ENCODE measurements at regions of chr3 and their contacts with region 1.

Region 1: GRCh38 chr3:46359733-46360493 is 6.0 kb downstream of the CCR2 start:
- DNase-seq: peak; percentile 66
- ATAC-seq: peak; percentile 83
- H3K4me3 Mint-ChIP-seq: no peak overlapping the region
- H3K27ac Mint-ChIP-seq: peak overlapping the region; percentile 64
- H3K4me1 Mint-ChIP-seq: peaks cover 81% of the 10 kb centered on the region
- H3K27me3 Mint-ChIP-seq: peaks cover 20% of the 10 kb centered on the region

Region 2: DNA sequence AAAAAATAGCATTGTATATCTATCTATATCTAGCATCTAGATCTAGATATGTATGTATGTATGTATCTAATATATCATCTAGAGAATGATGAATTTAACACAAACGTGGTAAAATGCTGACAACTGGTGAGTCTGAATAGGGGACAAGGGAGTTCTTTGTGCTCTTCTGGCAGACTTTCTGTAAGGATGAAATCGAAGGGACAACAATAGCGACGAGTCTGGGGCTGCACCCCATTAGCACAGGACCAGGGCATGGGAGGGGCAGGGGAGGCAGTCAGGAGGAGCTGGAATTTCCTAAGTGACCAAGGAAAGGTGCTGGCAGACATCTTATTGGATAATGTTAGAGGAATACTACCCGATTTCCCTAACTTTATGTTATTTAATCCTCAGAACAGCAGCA is 159.7 kb before region 1 on chr3:
- CTCF ChIA-PET with region 1: no interaction called
- DNase-seq: no peak
- ATAC-seq: no peak
- H3K4me3 Mint-ChIP-seq: no peak overlapping the region
- H3K27ac Mint-ChIP-seq: no peak overlapping the region
- H3K4me1 Mint-ChIP-seq: peaks cover 34% of the 10 kb centered on the region
- H3K27me3 Mint-ChIP-seq: no peaks in the 10 kb centered on the region

Region 3: GRCh38 chr3:46325645-46326585 is 34.0 kb before region 1 on chr3:
- CTCF ChIA-PET with region 1: no interaction called
- DNase-seq: no peak
- ATAC-seq: no peak
- H3K4me3 Mint-ChIP-seq: no peak overlapping the region
- H3K27ac Mint-ChIP-seq: no peak overlapping the region
- H3K4me1 Mint-ChIP-seq: peaks cover 4% of the 10 kb centered on the region
- H3K27me3 Mint-ChIP-seq: peaks cover 23% of the 10 kb centered on the region

Region 4: GRCh38 chr3:46349485-46350261 is 10.2 kb before region 1 on chr3:
- CTCF ChIA-PET with region 1: interaction called, 11 read pairs
- DNase-seq: no peak
- ATAC-seq: peak; percentile 66
- H3K4me3 Mint-ChIP-seq: peak overlapping the region; percentile 25
- H3K27ac Mint-ChIP-seq: peak overlapping the region; percentile 93
- H3K4me1 Mint-ChIP-seq: peaks cover 71% of the 10 kb centered on the region
- H3K27me3 Mint-ChIP-seq: peaks cover 9% of the 10 kb centered on the region